ENCODE measurements at regions of chrX and their contacts with region 1.

Region 1: GRCh38 chrX:64427787-64428186 is 32.5 kb upstream of the MTMR8 start:
- DNase-seq: no peak
- H3K4me3 ChIP-seq: no peak overlapping the region
- H3K27ac ChIP-seq: no peak overlapping the region
- H3K4me1 ChIP-seq: no peaks in the 10 kb centered on the region
- H3K27me3 ChIP-seq: no peaks in the 10 kb centered on the region
- CTCF ChIP-seq: no peak

Region 2: DNA sequence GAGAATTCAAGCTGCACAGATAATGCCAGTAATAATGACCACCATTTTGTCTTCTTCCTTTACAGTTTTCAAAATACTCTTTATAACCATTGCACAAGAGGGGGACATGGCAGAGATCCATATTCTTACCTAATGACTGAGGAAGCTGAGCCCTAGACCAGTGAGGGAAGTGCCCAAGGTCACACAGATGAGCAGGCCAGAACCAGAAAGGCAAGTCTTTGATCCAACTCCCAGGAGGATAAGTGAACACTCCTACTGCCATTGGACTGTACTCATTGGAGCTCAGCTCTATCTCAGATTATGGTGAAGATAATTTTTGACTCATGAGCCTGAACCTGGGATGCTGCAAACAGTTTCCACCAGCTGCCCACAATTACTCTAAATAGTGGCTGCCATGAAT is 250.9 kb before region 1 on chrX:
- CTCF ChIA-PET with region 1: no interaction called
- POLR2A ChIA-PET with region 1: no interaction called
- intact Hi-C with region 1: no loop called
- DNase-seq: no peak
- H3K4me3 ChIP-seq: no peak overlapping the region
- H3K27ac ChIP-seq: no peak overlapping the region
- H3K4me1 ChIP-seq: no peaks in the 10 kb centered on the region
- H3K27me3 ChIP-seq: no peaks in the 10 kb centered on the region
- CTCF ChIP-seq: no peak

Region 3: GRCh38 chrX:64580035-64580434 is 152.2 kb after region 1 on chrX:
- CTCF ChIA-PET with region 1: no interaction called
- POLR2A ChIA-PET with region 1: no interaction called
- intact Hi-C with region 1: no loop called
- DNase-seq: no peak
- H3K4me3 ChIP-seq: no peak overlapping the region
- H3K27ac ChIP-seq: no peak overlapping the region
- H3K4me1 ChIP-seq: no peaks in the 10 kb centered on the region
- H3K27me3 ChIP-seq: no peaks in the 10 kb centered on the region
- CTCF ChIP-seq: no peak

Region 4: DNA sequence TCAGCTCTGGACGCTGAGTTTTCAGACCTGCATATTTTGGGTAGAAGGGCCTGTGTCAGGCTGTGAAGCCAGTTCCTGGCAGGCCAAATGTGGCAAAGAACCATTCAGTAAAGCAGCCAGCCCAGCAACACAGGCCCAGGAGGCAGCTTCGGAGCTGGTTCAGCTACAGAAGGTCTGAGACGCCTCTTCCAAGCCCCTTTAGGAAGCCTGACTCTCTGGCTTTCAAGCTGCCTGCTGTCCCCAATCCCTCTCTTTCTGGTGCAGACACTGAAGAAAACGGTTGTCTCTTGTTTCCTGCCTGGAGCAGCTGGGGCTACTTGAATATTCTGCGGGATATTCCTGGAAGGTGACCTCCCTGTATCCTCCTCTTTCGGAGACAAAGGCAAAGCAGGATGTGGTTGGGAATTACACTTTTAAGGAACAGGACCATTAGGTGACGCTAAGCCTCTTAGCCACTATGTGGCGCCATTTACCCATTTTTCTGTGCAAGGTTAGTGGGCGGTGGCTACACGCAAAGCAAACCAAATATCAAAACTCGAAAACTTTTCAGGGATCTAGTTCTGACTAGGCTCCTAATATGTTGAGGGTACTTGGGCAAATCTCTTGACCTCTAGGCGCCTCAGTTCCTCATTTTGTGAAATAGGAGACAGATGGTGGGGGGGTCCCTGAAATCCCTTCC is 1154.0 kb after region 1 on chrX:
- CTCF ChIA-PET with region 1: interaction called, 10 read pairs
- POLR2A ChIA-PET with region 1: no interaction called
- intact Hi-C with region 1: no loop called
- DNase-seq: peak in 1 of 2 experiments; percentile 49
- H3K4me3 ChIP-seq: no peak overlapping the region
- H3K27ac ChIP-seq: no peak overlapping the region
- H3K4me1 ChIP-seq: no peaks in the 10 kb centered on the region
- H3K27me3 ChIP-seq: no peaks in the 10 kb centered on the region
- CTCF ChIP-seq: peak; percentile 81